Psoas muscle (tissue), 8 donors: ENCODE measurements at regions of chr2 and their contacts with region 1.

Region 1: GRCh38 chr2:171433763-171434670 is at the starts of genes DCAF17 and METTL8:
- DNase-seq: peak; percentile 96 to 98
- ATAC-seq: peak; percentile 97 to 98 (median 98)
- H3K4me3 ChIP-seq: peak within 1 kb of the TSS; percentile 87
- H3K27ac ChIP-seq: peak within 1 kb of the TSS; percentile 98
- H3K4me1 ChIP-seq: peaks cover 13% of the 10 kb centered on the region
- H3K27me3 ChIP-seq: no peaks in the 10 kb centered on the region
- CTCF ChIP-seq: peak; percentile 22
- total RNA-seq, gene DCAF17: 7.1 to 10.8 (median 8.5) TPM
- total RNA-seq, gene METTL8: 8.0 to 15.5 (median 12.4) TPM

Region 2: GRCh38 chr2:171160119-171160955 is 273.7 kb before region 1 on chr2 and contains the start of gene TLK1:
- intact Hi-C with region 1: loop called (anchors 5 kb)
- DNase-seq: peak; percentile 77 to 86
- ATAC-seq: peak; percentile 82 to 89 (median 86)
- H3K4me3 ChIP-seq: peak within 1 kb of the TSS; percentile 82
- H3K27ac ChIP-seq: peak within 1 kb of the TSS; percentile 93
- H3K4me1 ChIP-seq: peaks cover 26% of the 10 kb centered on the region
- H3K27me3 ChIP-seq: no peaks in the 10 kb centered on the region
- CTCF ChIP-seq: no peak
- total RNA-seq, gene TLK1: 17.5 to 22.2 (median 20.6) TPM